ENCODE measurements at regions of chr2 and their contacts with region 1.

Region 1: GRCh38 chr2:219543601-219544358 is at the starts of genes CHPF and TMEM198:
- H3K4me3 ChIP-seq: peak within 1 kb of the TSS; percentile 69
- H3K27ac ChIP-seq: peak within 1 kb of the TSS; percentile 73; the same call in 1 of the 2 replicates
- H3K4me1 ChIP-seq: no peaks in the 10 kb centered on the region
- CTCF ChIP-seq: no peak

Region 2: GRCh38 chr2:219475697-219476651 is 67.8 kb before region 1 on chr2:
- CTCF ChIA-PET with region 1: interaction called, 14 read pairs
- POLR2A ChIA-PET with region 1: no interaction called
- H3K4me3 ChIP-seq: no peak overlapping the region
- H3K27ac ChIP-seq: no peak overlapping the region
- H3K4me1 ChIP-seq: 0 out of 2 replicates have a peak, but pooled peaks cover 2% of the 10 kb centered on the region
- CTCF ChIP-seq: peak; percentile 83

Region 3: DNA sequence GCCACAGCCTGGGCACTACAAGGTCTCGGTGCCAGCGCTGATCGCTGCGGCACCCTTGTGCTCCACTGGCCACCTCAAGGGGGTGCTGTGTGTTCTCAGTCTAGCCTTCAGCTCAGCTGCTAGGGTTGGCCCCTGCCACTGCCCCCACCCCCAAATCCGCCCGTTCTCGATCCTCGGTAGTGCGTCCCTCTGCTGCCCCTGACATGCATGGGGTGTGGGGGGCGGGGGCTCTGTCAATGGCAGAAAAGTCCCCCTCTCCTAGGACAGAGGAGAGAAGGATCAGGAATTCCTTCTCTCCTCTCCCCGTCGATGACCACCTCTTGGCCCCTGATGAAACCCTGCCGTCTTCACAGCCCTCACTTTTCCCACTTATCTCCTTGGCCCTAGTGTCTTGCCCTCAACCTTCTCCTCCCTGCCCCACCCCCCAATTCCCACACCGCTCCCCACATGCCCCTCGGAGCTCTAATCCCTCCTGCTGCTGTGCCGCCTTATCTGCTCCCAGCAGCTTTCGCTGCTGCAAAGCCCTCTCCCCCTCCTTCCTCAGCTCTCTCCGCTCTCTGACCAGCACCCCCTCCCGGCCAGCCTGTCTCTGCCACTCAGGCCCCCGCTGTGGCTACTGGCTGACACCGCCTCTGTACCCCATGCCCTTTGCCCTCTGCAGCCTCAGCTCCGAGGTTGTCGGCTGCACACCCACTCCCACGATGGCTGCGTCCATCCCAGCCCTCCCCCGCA is 33.8 kb before region 1 on chr2:
- CTCF ChIA-PET with region 1: interaction called, 12 read pairs
- POLR2A ChIA-PET with region 1: interaction called, 3 read pairs
- H3K4me3 ChIP-seq: peak overlapping the region; percentile 25
- H3K27ac ChIP-seq: no peak overlapping the region
- H3K4me1 ChIP-seq: peaks cover 2% of the 10 kb centered on the region
- CTCF ChIP-seq: peak; percentile 87

Region 4: GRCh38 chr2:219571311-219572236 is 27.8 kb after region 1 on chr2 and contains the start of gene OBSL1:
- CTCF ChIA-PET with region 1: interaction called, 13 read pairs
- POLR2A ChIA-PET with region 1: interaction called, 12 read pairs
- H3K4me3 ChIP-seq: peak within 1 kb of the TSS; percentile 91
- H3K27ac ChIP-seq: peak within 1 kb of the TSS; percentile 86
- H3K4me1 ChIP-seq: peaks cover 14% of the 10 kb centered on the region
- CTCF ChIP-seq: no peak; the same call in 1 of the 2 replicates

Region 5: GRCh38 chr2:219633276-219634065 is 89.7 kb after region 1 on chr2:
- CTCF ChIA-PET with region 1: interaction called, 15 read pairs
- POLR2A ChIA-PET with region 1: interaction called, 3 read pairs
- H3K4me3 ChIP-seq: no peak overlapping the region
- H3K27ac ChIP-seq: no peak overlapping the region
- H3K4me1 ChIP-seq: no peaks in the 10 kb centered on the region
- CTCF ChIP-seq: no peak

Region 6: DNA sequence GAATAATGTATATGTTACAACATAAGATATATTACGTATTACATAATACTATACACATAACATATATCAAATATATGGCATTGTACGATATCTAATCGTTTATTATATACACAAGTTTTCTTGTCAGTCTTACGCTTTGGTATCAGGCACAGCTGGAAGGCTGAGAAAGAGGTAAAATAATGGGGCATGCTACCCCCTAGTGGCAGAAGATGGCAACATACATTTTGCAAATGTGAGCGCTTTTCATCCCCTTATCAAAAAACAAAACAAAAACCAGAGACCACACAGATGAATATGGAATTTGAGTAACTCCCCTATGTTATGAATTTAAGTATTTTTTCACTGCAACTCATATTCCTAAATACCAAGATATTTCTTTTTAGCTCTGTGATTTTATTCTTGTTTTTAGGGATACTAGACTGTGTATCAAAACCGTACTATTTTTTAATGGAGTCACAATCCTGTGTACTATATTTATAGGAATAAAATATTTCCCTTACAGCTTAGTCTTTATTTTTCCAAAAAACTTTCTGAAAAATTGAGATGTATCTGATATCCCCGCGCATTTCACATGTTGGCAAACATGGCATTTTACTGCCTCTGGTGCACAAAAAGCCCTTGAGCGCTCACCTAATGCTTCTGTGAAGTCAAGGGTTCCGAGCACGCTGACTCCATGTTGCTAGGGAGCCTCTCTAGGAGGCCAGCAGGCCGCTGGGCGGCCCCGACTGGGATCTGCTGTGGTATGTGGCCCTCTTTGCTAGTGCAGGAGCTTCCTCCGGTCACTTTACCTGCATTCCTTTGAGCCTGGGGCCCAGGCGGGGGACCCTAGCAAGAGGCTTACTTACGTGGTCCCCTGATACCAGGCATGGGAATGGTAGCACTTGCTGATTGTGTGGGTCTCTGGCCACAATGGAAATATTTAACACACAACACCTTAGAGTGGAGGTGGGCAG is 146.2 kb after region 1 on chr2:
- CTCF ChIA-PET with region 1: interaction called, 64 read pairs
- POLR2A ChIA-PET with region 1: no interaction called
- H3K4me3 ChIP-seq: no peak overlapping the region
- H3K27ac ChIP-seq: no peak overlapping the region
- H3K4me1 ChIP-seq: no peaks in the 10 kb centered on the region
- CTCF ChIP-seq: no peak

Measured in HEK293 (cell line).